AG04449 (cell line): ENCODE measurements at regions of chr12 and their contacts with region 1.

Region 1: DNA sequence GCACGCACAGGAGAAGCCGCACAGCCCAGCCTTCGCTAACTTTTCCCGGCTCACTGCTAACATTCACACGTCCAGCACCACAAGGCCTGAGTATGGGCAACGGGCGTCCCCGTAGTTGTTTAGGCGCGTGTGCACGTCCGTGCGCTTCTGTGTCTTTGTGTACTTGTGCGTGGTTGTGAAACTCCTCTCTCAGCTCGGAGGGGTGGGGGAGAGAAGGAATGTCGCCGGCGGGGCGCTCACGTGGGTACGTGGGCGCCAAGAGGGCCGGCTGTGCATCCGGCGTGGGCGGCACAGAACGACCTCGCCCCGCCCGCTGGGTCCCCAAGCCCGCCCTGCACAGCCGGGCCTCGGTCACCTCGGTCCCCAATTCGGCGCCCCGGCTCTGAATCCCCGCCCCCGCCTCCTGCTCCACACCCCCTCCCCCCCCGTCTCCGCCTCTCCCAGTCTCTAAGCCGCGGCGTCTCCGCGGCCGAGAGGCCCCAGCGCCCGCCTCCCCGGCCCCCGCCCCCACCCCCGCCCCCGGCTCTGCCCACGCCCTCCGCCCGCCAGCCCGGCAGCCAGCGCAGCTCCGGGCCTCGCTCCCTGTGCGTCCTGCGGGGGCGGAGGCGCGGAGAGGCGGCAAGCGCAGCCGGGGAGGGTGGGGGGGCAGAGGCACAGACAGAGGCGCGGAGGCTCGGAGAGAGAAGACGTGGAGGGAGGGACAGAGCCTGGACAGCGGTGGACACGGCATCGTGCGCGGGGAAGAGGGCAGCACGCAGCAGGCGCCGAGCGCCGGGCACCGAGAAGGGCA is at the start of gene NAB2:
- DNase-seq: peak; percentile 82
- H3K4me3 ChIP-seq: peak within 1 kb of the TSS; percentile 91
- CTCF ChIP-seq: no peak

Region 2: GRCh38 chr12:56593909-56594621 is 494.6 kb before region 1 on chr12:
- CTCF ChIA-PET with region 1: no interaction called
- POLR2A ChIA-PET with region 1: no interaction called
- DNase-seq: peak; percentile 46
- H3K4me3 ChIP-seq: no peak overlapping the region
- CTCF ChIP-seq: peak; percentile 89

Region 3: GRCh38 chr12:57106021-57106708 is 17.5 kb after region 1 on chr12:
- CTCF ChIA-PET with region 1: interaction called, 218 read pairs
- POLR2A ChIA-PET with region 1: interaction called, 81 read pairs
- DNase-seq: no peak
- H3K4me3 ChIP-seq: no peak overlapping the region
- CTCF ChIP-seq: no peak

Region 4: GRCh38 chr12:57135527-57136326 is 47.1 kb after region 1 on chr12:
- CTCF ChIA-PET with region 1: no interaction called
- POLR2A ChIA-PET with region 1: interaction called, 13 read pairs
- DNase-seq: no peak
- H3K4me3 ChIP-seq: peak overlapping the region; percentile 27
- CTCF ChIP-seq: no peak